PC-9 (cell line): ENCODE measurements at regions of chr19 and their contacts with region 1.

Region 1: DNA sequence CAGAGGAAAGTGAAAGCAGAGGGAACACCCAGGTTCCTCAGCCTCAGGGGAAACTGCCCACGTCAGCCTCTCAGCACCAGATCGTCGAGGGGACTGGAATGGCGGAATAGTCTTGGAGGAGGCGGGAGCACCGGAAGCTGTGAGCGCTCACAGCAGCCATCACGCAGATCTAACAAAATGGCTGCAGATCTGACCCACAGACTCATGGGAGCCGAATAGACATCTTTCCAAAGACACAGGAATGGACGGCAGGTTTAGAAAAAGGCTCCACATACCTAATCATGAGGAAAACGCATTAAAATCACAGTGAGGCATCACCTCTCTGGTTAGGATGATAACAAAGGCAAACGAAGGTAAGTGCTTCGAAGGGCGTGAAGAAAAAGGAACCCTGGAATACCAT is 11.8 kb upstream of the LILRA2 start:
- DNase-seq: no peak
- H3K4me3 ChIP-seq: no peak overlapping the region
- H3K27ac ChIP-seq: no peak overlapping the region
- H3K4me1 ChIP-seq: no peaks in the 10 kb centered on the region
- H3K27me3 ChIP-seq: peaks cover 67% of the 10 kb centered on the region
- CTCF ChIP-seq: no peak

Region 2: GRCh38 chr19:53294786-53295441 is 1266.9 kb before region 1 on chr19:
- CTCF ChIA-PET with region 1: no interaction called
- POLR2A ChIA-PET with region 1: interaction called, 24 read pairs
- intact Hi-C with region 1: no loop called
- DNase-seq: no peak
- H3K4me3 ChIP-seq: no peak overlapping the region
- H3K27ac ChIP-seq: no peak overlapping the region
- H3K4me1 ChIP-seq: no peaks in the 10 kb centered on the region
- H3K27me3 ChIP-seq: peaks cover 42% of the 10 kb centered on the region
- CTCF ChIP-seq: no peak